Mammary epithelial cell (primary cell): ENCODE measurements at regions of chr2 and their contacts with region 1.

Region 1: GRCh38 chr2:45935791-45936622 is 284.5 kb downstream of the PRKCE start:
- DNase-seq: peak; percentile 97
- H3K4me3 ChIP-seq: no peak overlapping the region
- H3K27ac ChIP-seq: peak overlapping the region; percentile 11
- H3K4me1 ChIP-seq: peaks cover 28% of the 10 kb centered on the region
- H3K27me3 ChIP-seq: no peaks in the 10 kb centered on the region
- CTCF ChIP-seq: peak; percentile 59 to 86

Region 2: GRCh38 chr2:45585267-45585861 is 350.6 kb before region 1 on chr2:
- CTCF ChIA-PET with region 1: no interaction called
- dilution Hi-C with region 1: no loop called
- in situ Hi-C with region 1: no loop called
- intact Hi-C with region 1: loop called (anchors 1 kb)
- DNase-seq: peak; percentile 32
- H3K4me3 ChIP-seq: no peak overlapping the region
- H3K27ac ChIP-seq: no peak overlapping the region
- H3K4me1 ChIP-seq: no peaks in the 10 kb centered on the region
- H3K27me3 ChIP-seq: no peaks in the 10 kb centered on the region
- CTCF ChIP-seq: peak; percentile 81 to 84

Region 3: GRCh38 chr2:45650851-45651414 is 285.1 kb before region 1 on chr2:
- CTCF ChIA-PET with region 1: interaction called, 4 read pairs
- dilution Hi-C with region 1: no loop called
- in situ Hi-C with region 1: loop called in 1 of 2 experiments (anchors 10 kb)
- intact Hi-C with region 1: loop called (anchors 1 kb)
- DNase-seq: peak; percentile 95
- H3K4me3 ChIP-seq: peak overlapping the region; percentile 60 to 95 (median 70)
- H3K27ac ChIP-seq: peak overlapping the region; percentile 57
- H3K4me1 ChIP-seq: peaks cover 17% of the 10 kb centered on the region
- H3K27me3 ChIP-seq: no peaks in the 10 kb centered on the region
- CTCF ChIP-seq: peak; percentile 26 to 58

Region 4: GRCh38 chr2:45823723-45824461 is 112.1 kb before region 1 on chr2:
- CTCF ChIA-PET with region 1: no interaction called
- dilution Hi-C with region 1: no loop called
- in situ Hi-C with region 1: no loop called
- intact Hi-C with region 1: loop called (anchors 1 kb)
- DNase-seq: peak; percentile 73
- H3K4me3 ChIP-seq: no peak overlapping the region
- H3K27ac ChIP-seq: no peak overlapping the region
- H3K4me1 ChIP-seq: peaks cover 33% of the 10 kb centered on the region
- H3K27me3 ChIP-seq: no peaks in the 10 kb centered on the region
- CTCF ChIP-seq: peak in 1 of 2 donors; percentile 7

Region 5: GRCh38 chr2:45946023-45946422 is 10.0 kb after region 1 on chr2:
- CTCF ChIA-PET with region 1: interaction called, 18 read pairs
- dilution Hi-C with region 1: no loop called
- in situ Hi-C with region 1: no loop called
- intact Hi-C with region 1: no loop called
- DNase-seq: peak; percentile 93
- H3K4me3 ChIP-seq: no peak overlapping the region
- H3K27ac ChIP-seq: no peak overlapping the region
- H3K4me1 ChIP-seq: peaks cover 28% of the 10 kb centered on the region
- H3K27me3 ChIP-seq: peaks cover 2% of the 10 kb centered on the region
- CTCF ChIP-seq: no peak